ENCODE measurements at regions of chr1 and their contacts with region 1.

Region 1: DNA sequence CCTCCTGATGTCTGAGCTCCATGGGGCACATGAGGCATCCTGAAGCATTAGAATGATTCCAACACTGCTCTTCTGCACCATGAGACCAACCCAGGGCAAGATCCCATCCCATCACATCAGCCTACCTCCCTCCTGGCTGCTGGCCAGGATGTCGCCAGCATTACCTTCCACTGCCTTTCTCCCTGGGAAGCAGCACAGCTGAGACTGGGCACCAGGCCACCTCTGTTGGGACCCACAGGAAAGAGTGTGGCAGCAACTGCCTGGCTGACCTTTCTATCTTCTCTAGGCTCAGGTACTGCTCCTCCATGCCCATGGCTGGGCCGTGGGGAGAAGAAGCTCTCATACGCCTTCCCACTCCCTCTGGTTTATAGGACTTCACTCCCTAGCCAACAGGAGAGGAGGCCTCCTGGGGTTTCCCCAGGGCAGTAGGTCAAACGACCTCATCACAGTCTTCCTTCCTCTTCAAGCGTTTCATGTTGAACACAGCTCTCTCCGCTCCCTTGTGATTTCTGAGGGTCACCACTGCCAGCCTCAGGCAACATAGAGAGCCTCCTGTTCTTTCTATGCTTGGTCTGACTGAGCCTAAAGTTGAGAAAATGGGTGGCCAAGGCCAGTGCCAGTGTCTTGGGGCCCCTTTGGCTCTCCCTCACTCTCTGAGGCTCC is 11.1 kb upstream of the RASSF5 start:
- DNase-seq: no peak
- H3K4me3 ChIP-seq: no peak overlapping the region
- H3K27ac ChIP-seq: no peak overlapping the region; a peak in 1 of 4 replicates
- H3K4me1 ChIP-seq: peaks cover 16 to 19% of the 10 kb centered on the region in 2 experiments; a peak in 2 of 4 replicates
- H3K27me3 ChIP-seq: no peaks in the 10 kb centered on the region
- CTCF ChIP-seq: no peak
- EP300 ChIP-seq: no peak
- RAD21 ChIP-seq: no peak

Region 2: GRCh38 chr1:206507284-206508129 is 11.2 kb after region 1 on chr1 and contains the start of gene RASSF5:
- CTCF ChIA-PET with region 1: interaction called, 37 read pairs
- POLR2A ChIA-PET with region 1: no interaction called
- DNase-seq: peak; percentile 77
- H3K4me3 ChIP-seq: peak within 1 kb of the TSS; percentile 64 to 65
- H3K27ac ChIP-seq: no peak within 1 kb of the TSS
- H3K4me1 ChIP-seq: peaks cover 10 to 16% of the 10 kb centered on the region in 2 experiments; a peak in 2 of 4 replicates
- H3K27me3 ChIP-seq: no peaks in the 10 kb centered on the region
- CTCF ChIP-seq: no peak
- EP300 ChIP-seq: no peak
- RAD21 ChIP-seq: no peak
- polyA plus RNA-seq, gene RASSF5: 1.7 and 2.2 TPM in 2 replicates